Activated T-helper 2 cell treated with anti-CD3 and anti-CD28 coated beads, Interferon-gamma antibody, Interleukin-2, Interleukin-4, amounts not matched to agents 10 μg/mL and 5 μg/mL and 100 μg/mL, durations not matched to agents 14 hours and 24 hours and 36 hours (primary cell): ENCODE measurements at regions of chr1 and their contacts with region 1.

Region 1: DNA sequence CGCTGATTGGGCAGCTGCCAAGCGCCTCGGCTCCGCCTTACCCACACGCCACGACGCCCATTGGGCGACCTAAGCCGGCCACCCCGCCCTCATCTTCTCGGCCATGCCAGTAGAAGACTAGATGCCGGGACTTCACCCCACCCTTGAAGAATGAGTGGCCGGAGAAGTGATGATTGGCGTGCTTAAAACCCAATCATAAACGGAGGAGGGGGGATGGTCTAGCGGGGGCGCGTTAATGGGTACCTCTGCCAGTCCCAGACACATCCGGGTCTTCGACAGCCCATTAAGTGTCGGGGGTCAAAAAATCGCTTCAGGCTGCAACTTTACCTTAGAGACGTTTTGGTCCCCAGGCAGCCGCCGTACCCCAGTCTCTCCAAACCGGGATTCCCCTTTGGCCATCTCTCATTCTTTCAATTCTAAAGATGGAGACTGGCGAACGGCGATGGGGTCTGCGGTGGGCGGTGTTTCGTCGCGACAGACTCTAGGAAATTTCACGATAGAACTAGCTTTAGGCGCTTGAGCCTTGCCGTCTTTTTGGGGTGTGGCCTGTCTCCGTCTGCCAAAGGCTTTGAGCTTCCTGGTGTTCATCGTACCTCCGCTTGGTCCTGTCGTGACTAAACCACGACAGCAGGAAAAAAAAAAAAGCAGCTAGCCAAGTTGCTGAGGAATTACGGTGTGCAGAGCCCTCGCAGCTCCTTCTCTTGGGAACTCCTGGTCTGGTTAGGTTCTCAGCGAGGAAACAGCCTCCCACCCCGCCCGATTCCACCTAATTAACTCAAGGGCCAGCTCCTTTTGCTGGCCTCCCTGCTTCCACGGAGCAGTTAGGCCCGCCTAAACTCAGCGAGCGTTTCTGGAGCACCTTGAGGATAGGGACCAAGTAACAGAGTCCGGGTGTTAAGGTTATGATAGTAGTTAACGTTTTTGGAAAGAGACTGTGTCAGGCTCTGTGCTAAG is at the start of gene GATAD2B:
- DNase-seq: peak; percentile 99
- H3K4me3 Mint-ChIP-seq: peak within 1 kb of the TSS; percentile 94
- H3K27ac Mint-ChIP-seq: peak within 1 kb of the TSS; percentile 94
- H3K4me1 Mint-ChIP-seq: peaks cover 35% of the 10 kb centered on the region
- H3K27me3 Mint-ChIP-seq: no peaks in the 10 kb centered on the region
- total RNA-seq, gene GATAD2B: 70.0 and 70.2 TPM in 2 replicates

Region 2: GRCh38 chr1:153805042-153805745 is 118.1 kb before region 1 on chr1:
- intact Hi-C with region 1: loop called (anchors 5 kb)
- DNase-seq: peak; percentile 55
- H3K4me3 Mint-ChIP-seq: peak overlapping the region; percentile 24
- H3K27ac Mint-ChIP-seq: peak overlapping the region; percentile 77
- H3K4me1 Mint-ChIP-seq: peaks cover 24% of the 10 kb centered on the region
- H3K27me3 Mint-ChIP-seq: no peaks in the 10 kb centered on the region

Region 3: DNA sequence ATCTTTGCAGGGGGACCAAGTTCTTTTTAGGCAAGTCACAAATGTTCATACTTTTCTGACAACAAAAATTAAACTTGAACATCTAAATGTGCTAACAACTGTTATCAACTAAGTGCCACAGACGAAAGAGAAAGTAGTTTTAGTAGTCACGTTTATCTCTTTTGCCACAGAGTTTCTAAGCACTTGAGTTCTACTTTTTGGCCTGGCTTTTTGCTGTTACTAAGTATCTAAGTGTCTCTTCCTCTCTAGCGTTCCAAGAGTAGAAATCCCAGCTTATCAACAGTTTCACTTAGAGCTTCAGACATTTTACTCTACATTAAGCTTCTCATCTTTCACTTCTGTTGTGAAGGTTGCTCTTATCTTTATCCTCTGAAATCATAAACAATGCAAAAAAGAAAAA is 34.7 kb before region 1 on chr1:
- intact Hi-C with region 1: loop called (anchors 5 kb)
- DNase-seq: no peak
- H3K4me3 Mint-ChIP-seq: peak overlapping the region; percentile 31
- H3K27ac Mint-ChIP-seq: peak overlapping the region; percentile 46
- H3K4me1 Mint-ChIP-seq: peaks cover 19% of the 10 kb centered on the region
- H3K27me3 Mint-ChIP-seq: no peaks in the 10 kb centered on the region

Region 4: GRCh38 chr1:153939016-153939415 is 15.8 kb after region 1 on chr1:
- intact Hi-C with region 1: no loop called
- DNase-seq: no peak
- H3K4me3 Mint-ChIP-seq: no peak overlapping the region
- H3K27ac Mint-ChIP-seq: no peak overlapping the region
- H3K4me1 Mint-ChIP-seq: peaks cover 7% of the 10 kb centered on the region
- H3K27me3 Mint-ChIP-seq: no peaks in the 10 kb centered on the region

Region 5: GRCh38 chr1:153958111-153958960 is 35.1 kb after region 1 on chr1 and contains the start of gene CRTC2:
- intact Hi-C with region 1: loop called (anchors 1 kb)
- DNase-seq: peak; percentile 96
- H3K4me3 Mint-ChIP-seq: peak within 1 kb of the TSS; percentile 97
- H3K27ac Mint-ChIP-seq: peak within 1 kb of the TSS; percentile 94
- H3K4me1 Mint-ChIP-seq: peaks cover 51% of the 10 kb centered on the region
- H3K27me3 Mint-ChIP-seq: no peaks in the 10 kb centered on the region
- total RNA-seq, gene CRTC2: 71.6 and 79.1 TPM in 2 replicates

Region 6: DNA sequence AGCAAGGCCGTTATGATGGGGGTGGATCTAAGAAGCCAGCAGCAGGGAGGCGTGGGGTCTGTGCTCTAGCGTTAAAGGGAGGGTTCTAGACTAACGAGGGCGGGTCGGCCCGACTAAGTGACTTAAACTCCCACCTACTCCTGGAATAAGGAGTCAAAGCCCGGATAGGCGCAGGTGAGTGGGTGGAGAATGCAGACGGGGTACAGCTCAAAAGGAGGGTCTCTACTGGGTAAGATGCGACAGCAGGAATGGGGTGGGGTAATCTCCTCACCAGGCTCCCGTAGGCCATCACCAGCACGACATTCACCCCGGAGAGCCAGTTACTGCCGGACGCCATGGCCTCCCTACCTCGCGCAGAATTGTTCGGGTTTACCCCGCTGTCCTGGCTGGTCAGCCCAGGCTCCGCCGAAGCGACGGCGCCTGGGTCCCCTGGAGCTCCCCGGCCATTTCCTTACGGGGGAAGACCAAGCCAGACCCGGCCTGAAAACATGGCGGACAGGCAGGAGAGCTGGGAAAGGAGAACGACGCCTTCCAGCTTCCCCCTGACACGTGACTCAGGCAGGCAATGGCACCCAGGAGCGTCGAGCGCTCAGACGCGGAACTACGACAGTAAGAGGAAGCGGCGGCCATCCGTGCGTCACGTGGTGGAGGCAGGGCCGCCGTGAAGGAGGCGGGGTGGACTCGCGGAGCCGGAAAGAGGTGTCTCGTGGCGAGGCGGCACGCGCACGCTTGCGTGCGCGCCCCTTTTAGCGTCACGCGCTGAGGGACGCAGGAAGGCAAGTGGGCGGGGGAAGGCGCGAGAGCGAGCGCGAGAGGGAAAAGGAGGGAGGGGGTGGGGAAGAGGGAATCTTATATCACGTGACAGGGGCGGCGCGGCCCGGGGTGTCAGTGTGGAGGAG is 297.1 kb after region 1 on chr1 and contains the start of gene UBAP2L:
- intact Hi-C with region 1: loop called (anchors 1 kb)
- DNase-seq: peak; percentile 99
- H3K4me3 Mint-ChIP-seq: peak within 1 kb of the TSS; percentile 93
- H3K27ac Mint-ChIP-seq: peak within 1 kb of the TSS; percentile 97
- H3K4me1 Mint-ChIP-seq: peaks cover 55% of the 10 kb centered on the region
- H3K27me3 Mint-ChIP-seq: no peaks in the 10 kb centered on the region
- total RNA-seq, gene UBAP2L: 259 and 263 TPM in 2 replicates